Cardiac septum (tissue), 1 donor: ENCODE measurements at regions of chr1 and their contacts with region 1.

Region 1: GRCh38 chr1:153977250-153978240 is at the start of gene JTB:
- DNase-seq: peak; percentile 97
- total RNA-seq, gene JTB: 61.7 TPM

Region 2: DNA sequence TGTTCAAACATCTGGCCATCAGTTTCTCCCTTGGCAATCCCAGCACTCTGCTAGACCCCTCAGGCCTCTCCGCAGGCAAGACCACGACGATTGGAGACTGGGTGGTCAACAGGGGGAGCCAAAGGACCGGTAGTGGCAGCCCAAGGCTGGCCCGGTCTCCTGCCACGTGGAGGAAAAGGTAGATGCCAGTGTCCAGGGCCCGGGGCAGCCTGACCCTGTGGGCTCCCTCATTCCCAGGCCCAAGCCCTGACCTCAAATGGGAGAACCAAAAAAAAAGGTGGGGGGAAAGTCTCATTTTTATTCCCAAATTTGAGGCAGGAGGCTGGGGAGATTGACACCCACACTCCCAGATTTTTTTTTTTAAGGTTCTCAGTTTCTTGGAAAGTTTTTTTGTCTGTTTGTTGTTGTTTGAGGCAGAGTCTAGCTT is 466.5 kb before region 1 on chr1:
- intact Hi-C with region 1: no loop called
- DNase-seq: peak; percentile 91

Region 3: GRCh38 chr1:153670859-153671627 is 306.5 kb before region 1 on chr1 and contains the start of gene ILF2:
- intact Hi-C with region 1: loop called (anchors 5 kb)
- DNase-seq: peak; percentile 96
- total RNA-seq, gene ILF2: 76.5 TPM

Region 4: DNA sequence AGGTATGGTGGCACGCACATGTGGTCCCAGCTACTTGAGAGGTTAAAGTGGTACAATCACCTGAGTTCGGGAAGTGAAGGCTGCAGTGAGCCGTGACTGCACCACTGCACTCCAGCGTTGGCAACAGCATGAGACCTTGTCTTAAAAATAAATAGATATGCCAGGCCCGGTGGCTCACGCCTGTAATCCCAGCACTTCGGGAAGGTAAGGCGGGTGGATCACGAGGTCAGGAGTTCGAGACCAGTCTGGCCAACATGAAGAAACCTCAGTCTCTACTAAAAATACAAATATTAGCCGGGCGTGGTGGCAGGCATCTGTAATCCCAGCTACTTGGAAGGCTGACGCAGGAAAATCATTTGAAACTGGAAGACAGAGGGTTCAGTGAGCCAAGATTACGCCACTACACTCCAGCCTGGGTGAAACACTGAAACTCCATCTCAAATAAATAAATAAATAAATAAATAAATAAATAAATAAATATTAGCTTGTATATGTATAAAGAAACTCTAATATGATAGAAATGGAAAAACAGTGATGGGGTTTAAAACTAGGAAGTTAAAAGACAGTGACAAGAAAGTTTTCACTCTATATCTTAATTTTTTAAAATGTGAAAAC is 73.6 kb before region 1 on chr1:
- intact Hi-C with region 1: no loop called
- DNase-seq: no peak

Region 5: DNA sequence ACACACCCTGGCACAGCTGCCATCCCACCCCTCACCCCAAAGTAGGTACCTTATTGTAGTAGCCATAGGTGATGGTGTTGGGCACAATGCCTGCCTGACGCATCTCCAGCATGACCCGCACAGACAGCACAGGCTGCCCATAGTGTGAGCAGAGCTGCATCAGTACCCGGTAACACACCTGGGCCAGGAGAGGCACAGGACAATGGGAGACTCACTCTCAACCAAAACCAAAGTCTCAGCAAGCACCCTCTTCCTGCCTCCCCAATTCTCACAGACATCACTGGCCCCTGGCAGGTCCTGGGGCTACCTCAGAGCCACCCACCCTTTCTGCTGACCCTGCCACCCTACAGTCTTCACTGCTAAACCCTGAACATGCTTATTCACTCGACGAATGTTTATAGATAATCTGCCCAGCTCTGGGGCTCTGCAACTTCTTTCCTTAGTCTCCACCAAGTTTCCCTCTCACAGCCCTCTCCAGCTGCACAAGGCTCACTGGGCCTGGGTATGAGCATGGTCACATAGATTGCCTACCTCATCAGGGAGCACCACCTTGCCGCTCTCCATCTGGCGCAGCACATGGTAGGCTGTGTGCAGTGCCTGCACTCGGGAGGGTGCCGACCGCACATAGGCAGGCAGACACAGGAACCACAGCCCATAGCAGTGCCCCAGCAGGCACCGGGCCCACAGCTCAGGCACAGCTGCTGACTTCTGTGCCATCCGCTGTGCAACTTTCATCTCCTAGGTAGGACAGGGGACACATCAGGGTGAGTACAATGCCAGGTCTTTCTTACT is 41.3 kb before region 1 on chr1:
- intact Hi-C with region 1: no loop called
- DNase-seq: no peak

Region 6: GRCh38 chr1:153958111-153958960 is 19.2 kb before region 1 on chr1 and contains the start of gene CRTC2:
- intact Hi-C with region 1: loop called (anchors 2 kb)
- DNase-seq: peak; percentile 99
- total RNA-seq, gene CRTC2: 20.6 TPM

Region 7: DNA sequence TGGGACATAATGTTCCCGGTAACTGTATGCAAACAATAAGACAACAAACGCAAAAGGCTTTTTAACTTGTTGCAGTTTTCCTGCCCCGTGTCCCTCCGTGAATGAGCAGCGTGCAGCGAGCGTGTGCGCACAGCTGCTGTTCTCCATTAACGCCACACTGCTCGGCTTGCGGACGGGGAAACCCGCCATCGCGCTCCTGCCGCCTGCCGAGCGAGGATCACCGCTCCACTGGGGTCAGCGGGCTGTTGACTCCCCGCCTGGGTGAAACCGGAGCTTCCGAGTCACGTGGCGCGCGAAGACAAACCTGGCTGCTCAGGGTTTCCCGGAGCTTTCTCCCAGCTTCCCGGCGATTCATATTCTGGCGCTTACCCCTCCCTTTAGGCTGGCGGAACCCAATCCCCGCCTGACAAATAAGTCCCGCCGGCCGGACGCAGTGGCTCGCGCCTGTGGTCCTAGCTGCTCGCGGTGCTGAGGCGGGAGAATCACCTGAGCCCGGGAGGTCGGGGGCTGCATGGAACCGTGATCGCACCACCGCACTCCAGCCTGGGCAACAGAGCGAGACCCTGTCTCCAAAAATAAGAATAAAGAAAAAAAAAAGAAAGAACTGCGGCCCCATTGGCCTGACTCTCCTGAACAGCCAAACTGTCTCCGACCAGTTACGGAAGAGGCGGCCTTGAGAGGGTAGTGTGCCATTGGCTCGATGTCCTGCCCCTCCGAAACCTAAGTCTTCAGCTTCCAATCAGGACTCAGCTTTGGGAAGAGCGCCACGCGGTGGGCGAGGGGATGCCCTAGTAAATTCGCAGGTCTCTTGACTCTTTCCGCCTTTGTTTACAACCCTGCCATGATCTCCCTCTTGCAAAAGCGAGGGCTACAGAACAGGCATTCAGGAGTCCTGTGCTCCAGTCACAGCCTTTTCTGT is 10.2 kb before region 1 on chr1 and contains the start of gene CREB3L4:
- intact Hi-C with region 1: loop called (anchors 1 kb)
- DNase-seq: peak; percentile 95
- total RNA-seq, gene CREB3L4: 3.8 TPM